Activated CD4-positive, alpha-beta T cell treated with anti-CD3 and anti-CD28 coated beads, Interleukin-2, amount 10 ng/mL, durations not matched to agents 24 days and 14 days (primary cell): ENCODE measurements at regions of chr6 and their contacts with region 1.

Region 1: GRCh38 chr6:137341681-137342195 is 122.6 kb upstream of the IFNGR1 start:
- DNase-seq: peak; percentile 82
- H3K4me3 Mint-ChIP-seq: peak overlapping the region; percentile 26
- H3K27ac Mint-ChIP-seq: no peak overlapping the region
- H3K4me1 Mint-ChIP-seq: peaks cover 13% of the 10 kb centered on the region
- H3K27me3 Mint-ChIP-seq: peaks cover 36% of the 10 kb centered on the region

Region 2: DNA sequence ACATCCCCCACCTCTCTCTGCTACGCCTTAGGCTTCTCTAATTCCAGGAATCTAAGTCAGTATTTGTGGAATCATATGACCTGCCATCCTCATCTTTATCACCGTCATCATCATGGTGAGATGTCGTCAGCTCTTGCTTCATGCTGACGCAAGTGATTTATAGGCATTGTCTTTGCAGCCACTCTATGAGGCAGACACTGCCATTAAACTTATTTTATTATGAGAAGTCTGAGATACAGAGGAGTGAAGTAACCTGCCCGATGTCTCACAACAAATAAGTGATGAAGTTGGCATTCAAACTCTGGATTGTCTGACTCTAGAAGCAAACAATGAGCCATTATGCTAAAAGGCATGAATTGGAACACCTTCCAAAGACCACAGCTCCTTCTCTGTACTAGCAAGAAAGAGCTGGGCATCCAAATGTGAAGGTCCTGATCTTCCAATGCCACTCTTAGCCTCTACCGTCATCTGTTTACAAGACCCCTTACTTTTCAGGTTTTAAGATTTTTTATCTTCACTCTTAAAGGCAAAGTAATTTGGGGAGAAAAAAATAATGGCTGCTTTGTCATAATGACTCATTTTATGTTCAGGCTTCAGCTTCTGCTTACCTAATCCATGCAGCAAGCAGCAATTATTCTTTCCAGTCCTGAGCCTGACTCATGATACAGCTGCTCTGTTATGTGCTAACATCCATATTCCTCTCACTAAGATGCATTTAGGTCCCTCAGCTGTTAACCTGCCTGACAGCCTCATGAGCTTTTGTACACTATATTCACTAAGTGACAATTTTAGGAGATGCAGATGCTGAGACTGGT is 938.4 kb before region 1 on chr6:
- intact Hi-C with region 1: no loop called
- DNase-seq: no peak
- H3K4me3 Mint-ChIP-seq: no peak overlapping the region
- H3K27ac Mint-ChIP-seq: no peak overlapping the region
- H3K4me1 Mint-ChIP-seq: no peaks in the 10 kb centered on the region
- H3K27me3 Mint-ChIP-seq: peaks cover 13% of the 10 kb centered on the region

Region 3: DNA sequence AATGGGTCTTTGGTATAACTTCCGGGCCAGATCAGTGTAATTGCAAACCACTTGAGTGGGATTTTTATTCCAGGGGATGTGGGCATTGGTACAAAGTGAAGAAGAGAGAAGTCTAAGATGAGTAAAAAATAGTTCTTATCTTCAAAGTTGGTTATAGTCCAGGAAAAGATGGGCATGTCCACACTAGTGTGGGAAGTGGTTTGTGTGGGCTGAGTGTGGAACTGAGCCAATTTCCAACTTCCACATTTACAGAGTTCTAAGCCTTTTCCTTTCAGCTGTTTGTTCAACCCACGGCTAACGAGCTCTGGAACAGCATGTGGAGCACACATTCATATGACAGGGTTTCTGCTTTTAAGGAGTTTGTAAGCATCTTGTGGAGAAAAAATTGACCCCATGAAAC is 50.3 kb before region 1 on chr6:
- intact Hi-C with region 1: no loop called
- DNase-seq: peak; percentile 43
- H3K4me3 Mint-ChIP-seq: no peak overlapping the region
- H3K27ac Mint-ChIP-seq: no peak overlapping the region
- H3K4me1 Mint-ChIP-seq: peaks cover 4% of the 10 kb centered on the region
- H3K27me3 Mint-ChIP-seq: peaks cover 15% of the 10 kb centered on the region

Region 4: GRCh38 chr6:137370871-137371633 is 29.3 kb after region 1 on chr6:
- intact Hi-C with region 1: no loop called
- DNase-seq: no peak
- H3K4me3 Mint-ChIP-seq: no peak overlapping the region
- H3K27ac Mint-ChIP-seq: no peak overlapping the region
- H3K4me1 Mint-ChIP-seq: peaks cover 4% of the 10 kb centered on the region
- H3K27me3 Mint-ChIP-seq: peaks cover 3% of the 10 kb centered on the region

Region 5: DNA sequence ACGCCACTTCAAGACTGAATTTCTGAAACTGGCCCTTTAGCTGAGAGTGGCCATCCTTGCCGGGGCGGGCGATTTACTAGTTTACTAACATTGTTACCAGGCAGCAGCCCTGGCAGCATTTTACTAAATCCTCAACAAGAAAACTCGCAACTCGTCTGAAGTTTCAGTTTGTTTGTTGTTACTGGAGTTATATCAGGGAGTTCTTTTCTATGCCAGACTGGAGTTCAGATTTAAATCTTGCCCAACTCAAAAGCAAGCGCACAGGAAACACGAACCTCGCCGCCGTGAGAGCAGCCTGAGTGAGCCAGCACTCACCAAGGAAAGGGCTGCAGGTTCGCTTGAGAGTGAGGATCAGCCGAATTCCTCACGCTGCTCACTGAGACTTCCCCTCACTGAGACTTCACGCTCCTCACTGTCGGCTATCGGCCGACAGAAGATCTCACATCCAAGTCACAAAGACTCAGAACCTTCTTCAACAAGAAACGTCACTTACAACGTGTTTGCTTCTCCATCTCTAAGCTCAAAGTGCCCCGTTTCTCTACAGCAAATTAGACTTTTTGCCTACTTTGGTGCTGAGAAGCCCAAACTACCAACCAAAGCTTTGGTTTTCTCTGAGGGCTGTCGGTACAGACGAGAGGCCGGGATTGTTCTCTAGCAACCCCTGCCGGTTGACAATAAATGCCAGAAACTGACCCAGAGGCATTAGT is 73.5 kb after region 1 on chr6:
- intact Hi-C with region 1: loop called (anchors 1 kb)
- DNase-seq: peak; percentile 90
- H3K4me3 Mint-ChIP-seq: peak overlapping the region; percentile 79
- H3K27ac Mint-ChIP-seq: peak overlapping the region; percentile 38
- H3K4me1 Mint-ChIP-seq: peaks cover 9% of the 10 kb centered on the region
- H3K27me3 Mint-ChIP-seq: peaks cover 24% of the 10 kb centered on the region

Region 6: DNA sequence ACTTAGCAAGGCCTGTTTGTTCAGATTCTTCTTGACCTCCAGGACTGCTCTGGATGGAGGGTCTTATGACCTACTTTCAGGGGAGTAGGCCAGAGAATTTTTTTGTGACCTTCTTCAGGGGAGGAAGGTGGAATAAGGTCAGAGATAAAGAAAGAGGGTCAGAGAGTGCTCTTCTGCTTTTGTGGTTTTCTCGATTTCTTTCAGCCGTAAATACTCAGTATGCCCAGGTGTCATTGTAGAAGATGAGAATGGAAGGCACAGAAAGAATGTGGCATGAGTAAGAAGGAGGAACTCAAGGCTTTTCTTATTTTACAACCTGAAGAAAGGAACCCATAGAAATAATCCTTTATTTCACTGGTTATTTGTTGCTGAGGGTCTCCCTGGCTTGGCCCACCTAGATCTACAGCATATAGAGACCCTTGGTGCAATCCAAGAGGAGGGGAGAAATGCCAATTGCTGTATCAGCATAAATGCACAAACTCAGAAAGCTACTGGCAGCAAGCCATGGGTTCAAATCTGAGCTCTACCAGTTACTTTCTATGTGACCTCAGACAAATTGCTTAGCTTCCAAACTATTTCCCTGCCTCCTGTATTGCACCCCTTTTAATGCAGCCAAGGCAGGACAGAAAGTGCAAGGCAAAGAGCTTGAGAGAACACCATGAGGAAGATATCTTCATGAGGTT is 84.4 kb after region 1 on chr6:
- intact Hi-C with region 1: no loop called
- DNase-seq: no peak
- H3K4me3 Mint-ChIP-seq: no peak overlapping the region
- H3K27ac Mint-ChIP-seq: no peak overlapping the region
- H3K4me1 Mint-ChIP-seq: peaks cover 7% of the 10 kb centered on the region
- H3K27me3 Mint-ChIP-seq: peaks cover 17% of the 10 kb centered on the region

Region 7: GRCh38 chr6:137589067-137589848 is 247.5 kb after region 1 on chr6:
- intact Hi-C with region 1: loop called (anchors 1 kb)
- DNase-seq: peak; percentile 84
- H3K4me3 Mint-ChIP-seq: no peak overlapping the region
- H3K27ac Mint-ChIP-seq: no peak overlapping the region
- H3K4me1 Mint-ChIP-seq: peaks cover 6% of the 10 kb centered on the region
- H3K27me3 Mint-ChIP-seq: peaks cover 36% of the 10 kb centered on the region